Naive thymus-derived CD8-positive, alpha-beta T cell (primary cell): ENCODE measurements at regions of chr2 and their contacts with region 1.

Region 1: DNA sequence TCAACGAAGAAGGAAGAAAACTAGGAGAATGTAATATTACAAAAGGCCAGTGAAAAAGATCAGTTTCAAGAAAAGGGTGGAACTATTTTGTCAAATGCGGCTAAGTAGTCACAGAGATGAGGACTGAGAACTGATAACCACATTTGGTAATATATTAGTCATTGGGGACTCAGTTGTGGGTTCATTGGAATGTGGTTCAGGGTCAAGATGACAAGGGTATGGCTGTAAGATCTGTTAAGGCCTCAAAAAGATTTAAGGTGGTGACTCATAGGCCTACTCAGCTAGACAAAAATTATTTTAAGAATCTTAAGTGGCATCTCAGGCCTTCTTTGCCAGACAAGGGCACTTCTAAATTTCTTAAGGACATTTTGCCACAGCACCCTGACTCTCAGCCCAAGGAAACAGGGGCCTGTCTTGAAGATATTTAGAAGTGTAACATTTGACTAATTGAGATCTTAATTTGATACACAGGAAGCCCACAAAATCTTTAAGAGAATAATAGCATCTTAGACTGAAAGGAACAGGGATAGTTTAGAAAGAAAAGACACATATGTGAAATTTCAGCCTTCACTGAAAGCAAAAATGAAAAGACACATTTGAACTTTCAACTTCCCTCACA is 81.3 kb downstream of the STRADB start:
- DNase-seq: no peak
- ATAC-seq: no peak
- H3K4me3 Mint-ChIP-seq: no peak overlapping the region
- H3K27ac Mint-ChIP-seq: peak overlapping the region in 2 of 10 donors; percentile 26 to 60
- H3K4me1 Mint-ChIP-seq: no peaks in the 10 kb centered on the region
- H3K27me3 Mint-ChIP-seq: no peaks in the 10 kb centered on the region

Region 2: DNA sequence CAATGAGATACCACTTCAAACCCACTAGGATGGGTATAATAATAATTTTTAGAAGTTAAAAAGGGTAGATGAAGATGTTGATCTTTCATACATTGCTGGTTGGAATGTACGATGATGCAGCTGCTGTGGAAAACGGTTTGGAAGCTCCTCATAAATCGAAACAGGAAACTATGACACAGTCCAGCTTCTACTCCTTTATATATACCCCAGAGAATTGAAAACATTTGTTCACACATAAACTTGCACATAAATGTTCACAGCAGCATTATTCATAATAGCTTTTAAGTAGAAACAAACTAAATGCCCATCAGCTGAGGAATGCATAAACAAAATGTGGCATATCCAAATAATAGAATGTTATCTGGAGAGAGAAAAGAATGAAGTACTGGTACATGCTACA is 13.8 kb after region 1 on chr2:
- POLR2A ChIA-PET with region 1: interaction called, 10 read pairs
- DNase-seq: no peak
- ATAC-seq: no peak
- H3K4me3 Mint-ChIP-seq: no peak overlapping the region
- H3K27ac Mint-ChIP-seq: no peak overlapping the region
- H3K4me1 Mint-ChIP-seq: no peaks in the 10 kb centered on the region
- H3K27me3 Mint-ChIP-seq: no peaks in the 10 kb centered on the region